GM13976 (cell line): ENCODE measurements at regions of chr9 and their contacts with region 1.

Region 1: GRCh38 chr9:89550346-89550927 is 52.5 kb upstream of the SEMA4D start:
- DNase-seq: no peak
- CTCF ChIP-seq: no peak

Region 2: DNA sequence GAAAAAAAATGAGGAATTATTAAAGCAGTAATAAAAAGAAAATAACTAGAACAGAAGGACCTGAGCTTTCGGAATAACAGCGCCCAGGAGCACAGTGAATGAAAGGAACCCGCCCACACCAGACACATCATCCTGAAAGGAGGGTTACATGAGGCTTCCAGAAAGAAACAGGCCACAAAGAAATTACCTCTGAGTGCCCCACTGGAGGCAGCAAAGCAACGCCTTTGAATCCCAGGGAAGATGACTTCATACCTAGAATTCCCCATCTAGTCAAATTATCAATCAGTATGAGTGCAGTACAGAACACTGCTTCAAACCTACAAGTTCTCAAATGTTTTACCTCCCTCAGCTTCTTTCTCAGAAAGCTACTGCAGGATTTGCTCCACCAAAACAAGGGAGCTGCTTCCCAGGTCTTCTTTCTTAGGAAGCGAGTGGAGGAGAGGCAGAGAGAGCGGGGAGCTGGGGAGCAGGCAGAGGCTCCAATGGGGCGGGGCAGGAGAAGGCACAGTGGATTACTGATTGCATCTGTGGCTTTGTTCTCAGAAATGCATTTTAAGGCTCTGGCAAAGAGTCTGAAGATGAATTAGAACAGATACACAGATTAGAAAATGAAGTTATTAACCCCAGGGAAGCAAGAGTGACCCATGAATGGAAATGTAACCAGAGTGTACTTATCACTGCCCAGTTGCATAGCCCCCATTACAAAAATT is 139.6 kb before region 1 on chr9:
- in situ Hi-C with region 1: loop called (anchors 5 kb)
- DNase-seq: peak; percentile 80
- CTCF ChIP-seq: peak; percentile 8